A673 (cell line): ENCODE measurements at regions of chr11 and their contacts with region 1.

Region 1: GRCh38 chr11:93543292-93543977 is at the start of gene SMCO4:
- DNase-seq: peak; percentile 91
- H3K4me3 ChIP-seq: peak within 1 kb of the TSS; percentile 67
- H3K27ac ChIP-seq: no peak within 1 kb of the TSS
- H3K4me1 ChIP-seq: no peaks in the 10 kb centered on the region
- H3K27me3 ChIP-seq: no peaks in the 10 kb centered on the region
- CTCF ChIP-seq: peak; percentile 70
- total RNA-seq, gene SMCO4: 9.3 and 11.9 TPM in 2 replicates

Region 2: DNA sequence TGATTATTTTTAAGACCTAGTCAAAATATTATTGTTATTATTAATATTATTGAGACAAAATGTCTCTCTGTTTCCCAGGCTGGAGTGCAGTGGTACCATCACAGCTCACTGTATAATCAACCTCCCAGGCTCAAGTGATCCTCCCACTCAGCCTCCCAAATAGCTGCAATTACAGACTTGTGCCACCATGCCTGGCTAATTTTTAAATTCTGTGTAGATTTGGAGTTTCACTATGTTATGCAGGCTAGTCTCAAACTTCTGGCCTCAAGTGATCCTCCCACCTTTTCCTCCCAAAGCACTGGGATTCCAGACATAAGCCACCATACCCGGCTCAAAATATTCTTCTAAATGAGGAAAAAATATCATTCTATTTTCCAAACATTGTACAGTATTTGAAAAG is 382.6 kb before region 1 on chr11:
- CTCF ChIA-PET with region 1: no interaction called
- POLR2A ChIA-PET with region 1: no interaction called
- intact Hi-C with region 1: no loop called
- DNase-seq: peak; percentile 20
- H3K4me3 ChIP-seq: no peak overlapping the region
- H3K27ac ChIP-seq: no peak overlapping the region
- H3K4me1 ChIP-seq: no peaks in the 10 kb centered on the region
- H3K27me3 ChIP-seq: no peaks in the 10 kb centered on the region
- CTCF ChIP-seq: no peak

Region 3: GRCh38 chr11:93234602-93235207 is 308.7 kb before region 1 on chr11:
- CTCF ChIA-PET with region 1: interaction called, 5 read pairs
- POLR2A ChIA-PET with region 1: no interaction called
- intact Hi-C with region 1: loop called (anchors 2 kb)
- DNase-seq: peak; percentile 84
- H3K4me3 ChIP-seq: no peak overlapping the region
- H3K27ac ChIP-seq: no peak overlapping the region
- H3K4me1 ChIP-seq: no peaks in the 10 kb centered on the region
- H3K27me3 ChIP-seq: peaks cover 16% of the 10 kb centered on the region
- CTCF ChIP-seq: peak; percentile 93